ENCODE measurements at regions of chr3 and their contacts with region 1.

Region 1: DNA sequence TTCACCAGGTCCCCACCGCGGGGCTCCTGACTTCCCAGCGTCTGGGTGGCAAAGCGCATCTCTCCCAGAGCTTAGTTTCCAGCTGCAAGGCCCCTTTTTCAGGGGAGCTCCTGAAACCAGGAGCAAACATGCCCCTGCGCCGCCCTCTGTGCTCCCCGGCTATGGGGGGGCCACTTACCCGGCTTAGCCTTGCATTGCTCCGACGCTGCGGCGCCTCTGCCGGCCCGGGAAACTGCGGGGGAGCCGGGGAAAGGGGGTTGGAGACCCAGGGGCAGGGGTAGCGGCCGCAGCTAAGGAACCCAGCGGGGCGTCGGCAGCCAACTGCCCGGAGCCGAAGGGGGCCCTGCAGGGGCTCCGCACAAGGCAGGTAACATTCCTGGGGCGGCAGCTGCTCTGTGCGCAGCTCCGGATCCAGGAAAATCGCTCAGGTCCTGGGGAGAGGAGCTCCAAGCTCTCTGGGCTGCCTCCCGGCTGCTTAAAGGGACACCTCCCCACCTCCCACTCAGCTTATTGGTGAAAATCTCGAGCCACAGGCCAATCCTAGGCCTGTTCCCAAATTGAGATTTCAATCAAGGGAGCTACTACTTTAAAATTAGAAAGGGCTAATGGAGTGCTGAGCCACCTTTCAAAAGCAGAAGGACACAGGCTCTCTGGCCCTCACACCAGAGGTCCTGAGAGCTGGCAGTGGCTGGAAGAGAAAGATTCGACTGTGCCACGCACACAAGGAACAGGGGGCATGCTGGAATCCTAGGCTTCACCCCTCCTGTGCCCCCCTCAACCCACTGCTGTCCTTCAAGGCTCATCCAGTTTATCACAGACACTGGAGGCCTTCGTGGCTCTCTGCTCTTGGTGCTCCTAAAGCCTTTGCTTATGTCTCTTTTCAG is 42.7 kb upstream of the PRICKLE2 start:
- DNase-seq: peak; percentile 76 to 78 (median 78)
- ATAC-seq: peak; percentile 83 to 91 (median 88)
- H3K4me3 ChIP-seq: peak overlapping the region; percentile 60 to 86 (median 75)
- H3K27ac ChIP-seq: peak overlapping the region; percentile 76 to 92 (median 88)
- H3K4me1 ChIP-seq: peaks cover 0 to 44% (median 21%) of the 10 kb centered on the region in 12 donors
- H3K27me3 ChIP-seq: no peaks in the 10 kb centered on the region
- CTCF ChIP-seq: peak in 1 of 12 donors; percentile 5
- POLR2A ChIP-seq: peak in 1 of 2 donors; percentile 77

Region 2: GRCh38 chr3:64187065-64187959 is 80.7 kb before region 1 on chr3:
- intact Hi-C with region 1: loop called in 2 of 10 experiments (anchors 10 kb)
- DNase-seq: peak; percentile 66 to 78 (median 76)
- ATAC-seq: peak; percentile 67 to 88 (median 78)
- H3K4me3 ChIP-seq: no peak overlapping the region
- H3K27ac ChIP-seq: peak overlapping the region in 11 of 12 donors; percentile 38 to 82 (median 66)
- H3K4me1 ChIP-seq: peaks cover 7 to 71% (median 56%) of the 10 kb centered on the region in 12 donors
- H3K27me3 ChIP-seq: no peaks in the 10 kb centered on the region
- CTCF ChIP-seq: peak in 2 of 12 donors; percentile 6 to 16
- POLR2A ChIP-seq: no peak

Region 3: GRCh38 chr3:64224826-64225610 is 42.9 kb before region 1 on chr3 and contains the start of gene PRICKLE2:
- intact Hi-C with region 1: loop called in 4 of 10 experiments (anchors 5 kb)
- DNase-seq: peak; percentile 80 to 86 (median 82)
- ATAC-seq: peak; percentile 63 to 88 (median 77)
- H3K4me3 ChIP-seq: peak within 1 kb of the TSS in 11 of 12 donors; percentile 3 to 57 (median 45)
- H3K27ac ChIP-seq: peak within 1 kb of the TSS; percentile 37 to 85 (median 72)
- H3K4me1 ChIP-seq: peaks cover 2 to 85% (median 56%) of the 10 kb centered on the region in 12 donors
- H3K27me3 ChIP-seq: no peaks in the 10 kb centered on the region
- CTCF ChIP-seq: peak in 6 of 12 donors; percentile 15 to 47 (median 34)
- POLR2A ChIP-seq: no peak
- total RNA-seq, gene PRICKLE2: 4.3 to 15.2 (median 7.8) TPM

Region 4: GRCh38 chr3:64355401-64355807 is 87.4 kb after region 1 on chr3:
- intact Hi-C with region 1: loop called in 1 of 10 experiments (anchors 5 kb)
- DNase-seq: peak in 2 of 5 donors; percentile 29 to 35
- ATAC-seq: peak in 3 of 4 donors; percentile 58 to 91 (median 74)
- H3K4me3 ChIP-seq: peak overlapping the region in 1 of 12 donors; percentile 4
- H3K27ac ChIP-seq: peak overlapping the region in 9 of 12 donors; percentile 22 to 62 (median 46)
- H3K4me1 ChIP-seq: peaks cover 0 to 39% (median 15%) of the 10 kb centered on the region in 12 donors
- H3K27me3 ChIP-seq: no peaks in the 10 kb centered on the region
- CTCF ChIP-seq: no peak
- POLR2A ChIP-seq: no peak

Region 5: DNA sequence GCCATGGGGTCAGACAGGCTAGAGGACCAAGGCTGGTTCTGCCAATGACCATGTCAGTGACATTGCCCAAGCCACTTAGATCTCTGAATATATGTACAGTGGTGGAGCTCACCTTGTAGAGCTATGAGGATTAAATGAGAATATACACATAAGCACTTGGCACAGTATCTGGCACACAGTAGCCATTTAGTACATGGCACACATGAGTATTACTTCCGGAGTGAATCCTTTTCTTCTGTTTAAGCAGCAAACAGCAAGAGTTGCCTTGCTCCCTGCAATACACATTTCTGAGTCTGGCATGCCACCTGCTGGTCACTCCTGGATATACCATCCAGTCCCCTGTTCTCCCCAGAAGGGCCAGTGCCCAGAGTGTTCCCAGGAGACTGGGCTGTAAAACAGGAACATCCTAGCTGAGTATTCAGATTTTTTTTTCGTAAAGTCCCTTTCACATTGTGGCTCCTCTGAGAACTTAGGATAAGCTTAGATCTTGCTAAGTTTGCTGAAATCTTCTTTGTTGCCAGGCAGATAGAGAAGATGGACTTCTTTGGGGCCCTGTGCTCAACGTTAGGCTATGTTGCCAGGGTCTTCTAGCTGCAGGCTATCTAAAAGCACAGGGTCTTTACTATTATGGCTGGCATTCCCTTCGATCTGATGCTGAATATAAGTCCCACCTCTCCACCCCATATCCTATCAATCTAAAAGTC is 216.5 kb after region 1 on chr3:
- intact Hi-C with region 1: loop called in 1 of 10 experiments (anchors 10 kb)
- DNase-seq: peak; percentile 67 to 82 (median 70)
- ATAC-seq: peak; percentile 83 to 94 (median 94)
- H3K4me3 ChIP-seq: no peak overlapping the region
- H3K27ac ChIP-seq: no peak overlapping the region
- H3K4me1 ChIP-seq: peaks cover 0 to 13% (median 1%) of the 10 kb centered on the region in 12 donors
- H3K27me3 ChIP-seq: peaks cover 0 to 2% (median 0%) of the 10 kb centered on the region in 9 donors
- CTCF ChIP-seq: peak; percentile 76 to 95 (median 88)
- POLR2A ChIP-seq: no peak